ENCODE measurements at regions of chr18 and their contacts with region 1.

Region 1: GRCh38 chr18:46173393-46174341 is 69.5 kb downstream of the HAUS1 start:
- DNase-seq: peak; percentile 97
- ATAC-seq: peak; percentile 88
- H3K4me3 Mint-ChIP-seq: peak overlapping the region; percentile 94
- H3K27ac Mint-ChIP-seq: peak overlapping the region; percentile 98
- H3K4me1 Mint-ChIP-seq: peaks cover 36% of the 10 kb centered on the region
- H3K27me3 Mint-ChIP-seq: no peaks in the 10 kb centered on the region
- CTCF ChIP-seq: peak; percentile 97

Region 2: GRCh38 chr18:46155641-46156051 is 18.0 kb before region 1 on chr18:
- CTCF ChIA-PET with region 1: interaction called, 126 read pairs
- POLR2A ChIA-PET with region 1: interaction called, 15 read pairs
- intact Hi-C with region 1: no loop called
- DNase-seq: peak; percentile 84
- ATAC-seq: peak; percentile 86
- H3K4me3 Mint-ChIP-seq: peak overlapping the region; percentile 61
- H3K27ac Mint-ChIP-seq: peak overlapping the region; percentile 99
- H3K4me1 Mint-ChIP-seq: peaks cover 63% of the 10 kb centered on the region
- H3K27me3 Mint-ChIP-seq: no peaks in the 10 kb centered on the region
- CTCF ChIP-seq: no peak

Region 3: GRCh38 chr18:46213295-46213694 is 39.6 kb after region 1 on chr18:
- CTCF ChIA-PET with region 1: interaction called, 47 read pairs
- POLR2A ChIA-PET with region 1: interaction called, 18 read pairs
- intact Hi-C with region 1: loop called (anchors 2 kb)
- DNase-seq: no peak
- ATAC-seq: no peak
- H3K4me3 Mint-ChIP-seq: no peak overlapping the region
- H3K27ac Mint-ChIP-seq: peak overlapping the region; percentile 75
- H3K4me1 Mint-ChIP-seq: peaks cover 88% of the 10 kb centered on the region
- H3K27me3 Mint-ChIP-seq: no peaks in the 10 kb centered on the region
- CTCF ChIP-seq: peak; percentile 69

Region 4: GRCh38 chr18:46239549-46239948 is 65.9 kb after region 1 on chr18:
- CTCF ChIA-PET with region 1: interaction called, 14 read pairs
- POLR2A ChIA-PET with region 1: interaction called, 7 read pairs
- intact Hi-C with region 1: no loop called
- DNase-seq: no peak
- ATAC-seq: no peak
- H3K4me3 Mint-ChIP-seq: no peak overlapping the region
- H3K27ac Mint-ChIP-seq: no peak overlapping the region
- H3K4me1 Mint-ChIP-seq: peaks cover 43% of the 10 kb centered on the region
- H3K27me3 Mint-ChIP-seq: no peaks in the 10 kb centered on the region
- CTCF ChIP-seq: no peak

Region 5: DNA sequence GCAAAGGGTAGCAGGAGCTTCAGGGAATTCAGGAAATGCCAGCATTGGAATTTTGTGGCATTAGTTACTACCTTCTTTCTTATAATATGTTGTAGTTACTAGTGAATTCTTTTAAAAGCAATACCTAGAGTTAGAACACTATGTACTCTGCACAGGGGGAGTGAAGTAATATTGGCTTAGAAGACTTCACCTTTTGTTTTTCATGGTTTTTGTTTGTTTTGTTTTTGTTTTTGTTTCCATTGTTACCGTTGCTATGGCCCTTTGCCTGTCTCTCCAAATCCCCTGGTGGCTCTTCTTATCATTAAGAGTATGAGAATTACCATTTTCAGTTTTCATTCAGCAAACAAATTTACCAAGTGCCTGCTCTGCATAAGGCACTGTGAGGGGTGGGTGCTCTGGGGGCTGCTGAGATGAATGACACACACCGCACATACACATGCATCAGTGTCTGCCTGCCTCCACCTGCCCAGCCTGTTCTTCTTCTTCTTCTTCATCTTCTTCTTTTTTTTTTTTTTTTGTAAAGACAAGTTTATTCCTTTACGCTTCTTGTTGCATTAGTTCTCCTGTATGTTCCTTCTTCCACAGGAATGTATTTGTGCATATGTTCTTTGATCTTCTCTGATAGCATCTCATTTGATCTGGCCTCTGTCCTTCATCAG is 90.7 kb after region 1 on chr18:
- CTCF ChIA-PET with region 1: interaction called, 22 read pairs
- POLR2A ChIA-PET with region 1: no interaction called
- intact Hi-C with region 1: no loop called
- DNase-seq: no peak
- ATAC-seq: peak; percentile 32
- H3K4me3 Mint-ChIP-seq: no peak overlapping the region
- H3K27ac Mint-ChIP-seq: peak overlapping the region; percentile 83
- H3K4me1 Mint-ChIP-seq: peaks cover 70% of the 10 kb centered on the region
- H3K27me3 Mint-ChIP-seq: no peaks in the 10 kb centered on the region
- CTCF ChIP-seq: no peak

Region 6: DNA sequence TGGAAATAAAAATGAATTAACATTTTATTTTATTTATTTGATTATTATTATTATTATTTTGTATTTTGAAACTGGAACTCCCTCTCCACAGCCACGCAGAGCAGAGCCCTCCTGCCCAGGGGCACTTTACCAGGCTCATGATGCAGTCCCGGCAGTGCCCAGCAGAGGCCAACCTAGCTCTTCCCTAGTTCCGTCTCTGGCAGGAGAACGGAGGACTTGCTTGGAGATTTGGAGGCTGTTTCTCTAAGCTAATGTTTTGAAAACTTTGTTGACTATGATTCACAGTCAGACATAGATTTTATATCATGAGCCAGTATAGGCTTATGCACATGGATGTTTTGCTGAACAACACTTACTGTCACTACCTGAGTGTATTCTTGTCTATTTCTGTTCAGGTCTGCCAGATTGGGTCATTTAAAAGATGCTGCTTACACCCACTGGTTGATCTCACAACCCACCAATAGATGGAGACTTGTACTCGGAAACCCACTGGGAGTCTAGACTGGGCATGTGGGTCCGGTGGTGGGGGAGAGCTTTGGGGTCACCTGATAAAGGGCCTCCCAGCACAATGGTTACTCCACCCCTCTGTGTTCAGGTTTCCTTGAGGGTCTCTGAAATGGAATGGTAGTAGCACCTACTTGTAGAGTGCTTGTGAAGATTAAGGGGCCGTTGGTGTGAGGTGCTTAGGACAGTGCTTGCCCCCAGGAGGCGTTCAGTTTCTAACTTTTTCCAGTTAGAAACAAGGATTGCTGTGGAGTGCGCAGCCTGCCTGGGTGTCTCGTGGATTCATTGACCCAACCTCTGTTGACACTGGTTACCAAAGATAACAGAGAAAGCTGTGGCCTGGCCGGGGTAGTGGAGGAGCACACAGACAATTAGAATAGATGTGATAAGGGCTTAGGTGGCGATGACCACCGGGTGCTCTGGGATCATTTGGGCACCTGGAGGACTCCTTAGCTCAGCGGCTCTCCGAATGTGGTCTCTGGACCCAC is 107.8 kb after region 1 on chr18:
- CTCF ChIA-PET with region 1: interaction called, 34 read pairs
- POLR2A ChIA-PET with region 1: interaction called, 4 read pairs
- intact Hi-C with region 1: no loop called
- DNase-seq: peak; percentile 79
- ATAC-seq: peak; percentile 96
- H3K4me3 Mint-ChIP-seq: no peak overlapping the region
- H3K27ac Mint-ChIP-seq: no peak overlapping the region
- H3K4me1 Mint-ChIP-seq: peaks cover 4% of the 10 kb centered on the region
- H3K27me3 Mint-ChIP-seq: no peaks in the 10 kb centered on the region
- CTCF ChIP-seq: peak; percentile 96